GM12878 (cell line): ENCODE measurements at regions of chr15 and their contacts with region 1.

Region 1: DNA sequence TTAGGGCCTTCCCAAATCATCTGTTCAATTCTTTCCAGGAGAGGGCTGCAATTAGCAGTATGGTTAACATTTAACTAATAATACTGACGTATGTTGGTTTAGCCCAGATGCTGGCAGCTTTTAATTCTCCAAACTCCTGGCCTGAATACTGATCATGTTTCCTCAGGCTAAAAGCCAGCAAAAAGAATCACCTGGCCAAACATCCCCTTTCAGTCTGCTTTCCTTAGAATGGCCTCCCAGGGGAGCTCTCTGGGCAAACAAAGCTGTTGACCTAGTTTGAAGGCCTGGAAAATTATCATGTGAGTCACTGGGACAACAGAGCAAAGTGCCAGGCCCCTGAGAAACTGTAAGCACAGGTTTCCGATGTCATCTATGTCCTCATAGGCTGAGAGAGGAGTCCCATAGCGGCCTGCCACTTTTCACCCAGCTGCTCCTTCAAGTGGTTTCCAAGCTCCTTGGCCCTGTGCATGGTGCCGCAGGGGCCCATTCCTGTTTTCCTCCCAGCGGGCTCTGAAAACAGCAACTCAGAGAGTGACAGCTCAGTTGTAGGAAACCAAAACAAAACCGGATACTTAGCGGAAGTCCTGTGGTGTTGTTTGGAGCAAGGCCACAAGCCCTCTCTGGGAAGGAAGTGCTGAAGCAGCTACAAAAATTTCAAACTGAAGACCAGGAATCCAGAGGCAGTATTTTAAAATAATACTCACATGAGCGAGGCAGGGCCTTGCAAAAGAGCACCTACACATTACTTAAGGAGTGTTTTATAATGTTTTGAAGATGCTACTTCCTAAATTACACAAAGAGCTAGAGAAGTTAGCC is 36.5 kb upstream of the RAB11A start:
- DNase-seq: no peak
- ATAC-seq: peak; percentile 56
- H3K4me3 ChIP-seq: peak overlapping the region; percentile 45; the same call in 1 of the 2 replicates
- H3K27ac ChIP-seq: peak overlapping the region; percentile 79
- H3K4me1 ChIP-seq: peaks cover 25% of the 10 kb centered on the region
- H3K27me3 ChIP-seq: no peaks in the 10 kb centered on the region
- CTCF ChIP-seq: no peak
- EP300 ChIP-seq: no peak
- POLR2A ChIP-seq: peak; percentile 36; the same call in 1 of the 2 replicates
- RAD21 ChIP-seq: no peak

Region 2: DNA sequence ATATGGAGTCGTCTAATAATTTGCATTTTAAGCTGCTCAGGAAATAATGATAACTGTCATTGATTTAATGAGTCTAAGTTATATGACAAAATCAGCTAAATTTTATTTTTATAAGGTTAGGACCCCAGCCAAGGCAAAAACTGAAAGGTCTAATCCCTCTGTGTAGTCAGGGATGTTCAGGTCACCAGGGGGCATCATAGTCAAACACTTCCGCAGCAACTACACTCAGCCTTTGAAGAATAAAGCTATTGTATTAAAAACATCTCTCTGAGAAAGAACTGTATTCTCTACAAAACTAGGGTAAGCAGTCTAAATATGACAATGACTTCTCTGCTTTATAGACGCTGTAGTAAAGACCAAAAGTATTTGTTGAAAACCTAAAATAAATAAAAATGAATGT is 236.8 kb before region 1 on chr15:
- CTCF ChIA-PET with region 1: interaction called, 15 read pairs
- POLR2A ChIA-PET with region 1: no interaction called
- RAD21 ChIA-PET with region 1: interaction called, 4 read pairs
- SMC1A ChIA-PET with region 1: interaction called, 3 read pairs
- in situ Hi-C with region 1: no loop called
- intact Hi-C with region 1: no loop called
- DNase-seq: no peak
- ATAC-seq: peak; percentile 47; the same call in 2 of the 3 replicates
- H3K4me3 ChIP-seq: no peak overlapping the region
- H3K27ac ChIP-seq: no peak overlapping the region
- H3K4me1 ChIP-seq: no peaks in the 10 kb centered on the region
- H3K27me3 ChIP-seq: no peaks in the 10 kb centered on the region
- CTCF ChIP-seq: peak; percentile 19 to 45 (median 34); a peak in 4 of 6 replicates
- EP300 ChIP-seq: no peak
- POLR2A ChIP-seq: no peak
- RAD21 ChIP-seq: peak; percentile 57

Region 3: DNA sequence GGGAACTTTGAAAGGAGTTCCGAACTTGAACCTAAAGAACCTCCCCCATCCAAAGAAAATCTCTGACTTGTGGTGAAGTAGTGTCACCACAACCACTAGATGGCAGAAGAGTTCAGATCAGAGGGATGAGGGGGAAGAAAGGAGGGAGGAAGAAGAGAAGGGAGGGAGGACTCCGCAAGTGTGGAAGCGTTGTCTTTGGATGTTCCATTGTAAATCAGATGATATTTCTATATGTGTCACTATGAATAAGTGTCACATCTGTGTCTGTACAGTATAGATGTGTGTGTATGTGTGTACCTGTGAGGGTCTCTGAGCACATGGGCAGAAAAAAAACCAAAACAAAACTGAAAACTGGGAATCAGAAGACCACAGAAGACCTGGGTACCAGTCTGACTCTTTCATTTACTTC is 194.1 kb before region 1 on chr15:
- CTCF ChIA-PET with region 1: interaction called, 192 read pairs
- POLR2A ChIA-PET with region 1: interaction called, 3 read pairs
- RAD21 ChIA-PET with region 1: interaction called, 69 read pairs
- SMC1A ChIA-PET with region 1: interaction called, 43 read pairs
- in situ Hi-C with region 1: no loop called
- intact Hi-C with region 1: loop called (anchors 5 kb)
- DNase-seq: peak; percentile 28
- ATAC-seq: peak; percentile 77
- H3K4me3 ChIP-seq: no peak overlapping the region
- H3K27ac ChIP-seq: no peak overlapping the region
- H3K4me1 ChIP-seq: no peaks in the 10 kb centered on the region
- H3K27me3 ChIP-seq: no peaks in the 10 kb centered on the region
- CTCF ChIP-seq: peak; percentile 78 to 89 (median 88)
- EP300 ChIP-seq: no peak
- POLR2A ChIP-seq: no peak
- RAD21 ChIP-seq: peak; percentile 94

Region 4: DNA sequence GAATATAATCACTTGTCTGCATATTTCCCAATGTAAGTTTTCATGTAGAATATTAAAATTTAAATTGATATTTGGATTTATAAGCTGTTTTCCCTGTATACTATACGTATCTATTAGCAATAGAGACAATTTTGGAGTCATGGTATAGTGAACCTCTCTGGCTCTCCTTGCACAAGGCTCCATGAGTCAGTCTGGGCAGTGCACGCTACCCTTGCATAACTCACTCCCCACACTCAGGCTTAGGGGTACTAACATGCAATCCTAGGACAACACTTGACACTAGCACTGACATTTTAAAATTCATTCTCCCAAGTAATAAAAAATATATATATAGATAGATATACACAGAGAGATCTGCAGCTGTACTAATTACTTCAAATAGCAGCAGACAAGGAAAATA is 171.8 kb before region 1 on chr15:
- CTCF ChIA-PET with region 1: interaction called, 11 read pairs
- POLR2A ChIA-PET with region 1: no interaction called
- RAD21 ChIA-PET with region 1: interaction called, 6 read pairs
- SMC1A ChIA-PET with region 1: interaction called, 15 read pairs
- in situ Hi-C with region 1: no loop called
- intact Hi-C with region 1: no loop called
- DNase-seq: no peak
- ATAC-seq: no peak
- H3K4me3 ChIP-seq: no peak overlapping the region
- H3K27ac ChIP-seq: no peak overlapping the region
- H3K4me1 ChIP-seq: peaks cover 7% of the 10 kb centered on the region; the same call in 1 of the 2 replicates
- H3K27me3 ChIP-seq: no peaks in the 10 kb centered on the region
- CTCF ChIP-seq: no peak
- EP300 ChIP-seq: no peak
- POLR2A ChIP-seq: no peak
- RAD21 ChIP-seq: no peak

Region 5: DNA sequence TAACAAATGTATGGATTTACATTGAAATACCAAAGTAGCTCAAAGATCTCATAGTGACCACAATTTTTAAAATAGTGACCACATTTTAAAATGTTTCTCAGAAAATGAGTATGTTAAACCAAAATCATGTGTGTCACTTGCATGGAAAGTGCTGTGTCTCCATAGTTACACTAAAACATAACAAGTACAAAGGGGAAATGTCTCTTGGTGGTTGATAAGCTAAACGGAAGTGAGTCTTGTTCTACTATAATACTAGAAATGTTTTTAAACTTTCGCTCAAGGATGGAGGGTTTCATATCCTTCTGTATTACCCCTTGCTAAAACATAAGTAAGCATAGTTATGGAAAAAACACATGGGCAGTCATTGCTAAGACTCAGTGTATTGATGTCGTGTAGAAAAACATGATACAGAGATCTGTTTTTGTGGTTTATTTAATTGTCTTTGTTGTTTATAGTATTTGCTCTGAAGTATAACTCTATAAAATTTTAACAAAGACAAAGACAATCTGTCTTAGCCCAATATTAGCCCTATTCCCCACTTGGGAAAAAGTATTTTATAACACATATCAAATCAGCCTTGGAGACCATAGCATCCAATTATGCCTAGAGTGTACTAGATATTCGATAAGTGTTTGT is 13.7 kb before region 1 on chr15:
- CTCF ChIA-PET with region 1: interaction called, 32 read pairs
- POLR2A ChIA-PET with region 1: interaction called, 15 read pairs
- RAD21 ChIA-PET with region 1: interaction called, 37 read pairs
- SMC1A ChIA-PET with region 1: interaction called, 66 read pairs
- in situ Hi-C with region 1: no loop called
- intact Hi-C with region 1: no loop called
- DNase-seq: peak; percentile 78
- ATAC-seq: peak; percentile 78
- H3K4me3 ChIP-seq: no peak overlapping the region
- H3K27ac ChIP-seq: peak overlapping the region; percentile 56
- H3K4me1 ChIP-seq: peaks cover 62% of the 10 kb centered on the region
- H3K27me3 ChIP-seq: no peaks in the 10 kb centered on the region
- CTCF ChIP-seq: no peak
- EP300 ChIP-seq: peak; percentile 100
- POLR2A ChIP-seq: no peak
- RAD21 ChIP-seq: no peak

Region 6: DNA sequence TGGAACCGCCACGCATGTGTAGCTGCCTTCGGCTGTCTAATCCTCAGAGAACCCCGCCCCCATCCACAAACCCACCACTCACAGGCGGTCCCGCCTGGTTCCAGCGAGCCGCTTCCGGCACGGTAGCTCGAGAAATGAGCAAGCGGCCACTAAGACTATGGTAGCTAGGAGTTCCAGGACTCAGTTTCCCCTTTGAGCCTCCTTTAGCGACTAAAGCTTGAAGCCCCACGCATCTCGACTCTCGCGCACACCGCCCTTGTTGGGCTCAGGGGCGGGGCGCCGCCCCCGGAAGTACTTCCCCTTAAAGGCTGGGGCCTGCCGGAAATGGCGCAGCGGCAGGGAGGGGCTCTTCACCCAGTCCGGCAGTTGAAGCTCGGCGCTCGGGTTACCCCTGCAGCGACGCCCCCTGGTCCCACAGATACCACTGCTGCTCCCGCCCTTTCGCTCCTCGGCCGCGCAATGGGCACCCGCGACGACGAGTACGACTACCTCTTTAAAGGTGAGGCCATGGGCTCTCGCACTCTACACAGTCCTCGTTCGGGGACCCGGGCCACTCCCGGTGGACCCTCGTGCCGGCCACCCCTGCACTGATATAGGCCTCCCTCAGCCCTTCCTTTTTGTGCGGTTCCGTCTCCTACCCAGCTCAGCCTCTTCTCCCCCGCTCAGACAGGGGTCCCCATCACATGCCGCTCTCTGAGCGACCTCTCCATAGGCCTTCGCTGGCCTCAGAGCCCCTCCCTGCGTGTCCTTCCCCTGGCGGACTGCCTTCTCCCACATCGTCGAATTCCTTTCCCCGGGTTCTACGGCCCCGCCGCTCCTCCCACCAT is 36.6 kb after region 1 on chr15 and contains the start of gene RAB11A:
- CTCF ChIA-PET with region 1: interaction called, 14 read pairs
- POLR2A ChIA-PET with region 1: interaction called, 6 read pairs
- RAD21 ChIA-PET with region 1: interaction called, 15 read pairs
- SMC1A ChIA-PET with region 1: interaction called, 21 read pairs
- in situ Hi-C with region 1: no loop called
- intact Hi-C with region 1: no loop called
- DNase-seq: peak; percentile 85
- ATAC-seq: peak; percentile 95
- H3K4me3 ChIP-seq: peak within 1 kb of the TSS; percentile 71
- H3K27ac ChIP-seq: peak within 1 kb of the TSS; percentile 80
- H3K4me1 ChIP-seq: no peaks in the 10 kb centered on the region
- H3K27me3 ChIP-seq: no peaks in the 10 kb centered on the region
- CTCF ChIP-seq: peak; percentile 45 to 60 (median 45); a peak in 5 of 6 replicates
- EP300 ChIP-seq: no peak
- POLR2A ChIP-seq: peak; percentile 92
- RAD21 ChIP-seq: peak; percentile 33; the same call in 1 of the 2 replicates
- polyA plus RNA-seq, gene RAB11A: 155 to 179 TPM